CD8-positive, alpha-beta T cell (primary cell): ENCODE measurements at regions of chr5 and their contacts with region 1.

Region 1: GRCh38 chr5:96934708-96935558 is 947 bp upstream of the LNPEP start:
- DNase-seq: peak; percentile 88 to 98 (median 93)
- ATAC-seq: peak; percentile 64
- H3K4me3 ChIP-seq: peak overlapping the region; percentile 88 to 96
- H3K4me3 Mint-ChIP-seq: peak overlapping the region; percentile 89
- H3K27ac ChIP-seq: peak overlapping the region; percentile 88 to 89
- H3K27ac Mint-ChIP-seq: peak overlapping the region; percentile 96
- H3K4me1 ChIP-seq: peaks cover 60% of the 10 kb centered on the region
- H3K4me1 Mint-ChIP-seq: peaks cover 69% of the 10 kb centered on the region
- H3K27me3 ChIP-seq: no peaks in the 10 kb centered on the region
- H3K27me3 Mint-ChIP-seq: no peaks in the 10 kb centered on the region
- CTCF ChIP-seq: no peak

Region 2: GRCh38 chr5:95646554-95647431 is 1288.1 kb before region 1 on chr5 and contains the start of gene RFESD:
- CTCF ChIA-PET with region 1: no interaction called
- POLR2A ChIA-PET with region 1: no interaction called
- intact Hi-C with region 1: loop called in 1 of 2 experiments (anchors 10 kb)
- DNase-seq: peak; percentile 86 to 96 (median 93)
- ATAC-seq: peak; percentile 93
- H3K4me3 ChIP-seq: peak within 1 kb of the TSS; percentile 67 to 77
- H3K4me3 Mint-ChIP-seq: peak within 1 kb of the TSS; percentile 91
- H3K27ac ChIP-seq: peak within 1 kb of the TSS; percentile 76 to 85
- H3K27ac Mint-ChIP-seq: peak within 1 kb of the TSS; percentile 94
- H3K4me1 ChIP-seq: peaks cover 20% of the 10 kb centered on the region
- H3K4me1 Mint-ChIP-seq: peaks cover 40% of the 10 kb centered on the region
- H3K27me3 ChIP-seq: no peaks in the 10 kb centered on the region
- H3K27me3 Mint-ChIP-seq: no peaks in the 10 kb centered on the region
- CTCF ChIP-seq: peak; percentile 22
- total RNA-seq, gene RFESD: 1.00 to 1.7 TPM

Region 3: GRCh38 chr5:96807075-96807654 is 127.8 kb before region 1 on chr5:
- CTCF ChIA-PET with region 1: no interaction called
- POLR2A ChIA-PET with region 1: interaction called, 8 read pairs
- intact Hi-C with region 1: loop called (anchors 1 to 5 kb)
- DNase-seq: peak in 2 of 9 experiments; percentile 9 to 32
- ATAC-seq: no peak
- H3K4me3 ChIP-seq: peak overlapping the region; percentile 71 to 85
- H3K4me3 Mint-ChIP-seq: peak overlapping the region; percentile 95
- H3K27ac ChIP-seq: peak overlapping the region; percentile 93 to 96
- H3K27ac Mint-ChIP-seq: peak overlapping the region; percentile 98
- H3K4me1 ChIP-seq: peaks cover 70% of the 10 kb centered on the region
- H3K4me1 Mint-ChIP-seq: peaks cover 82% of the 10 kb centered on the region
- H3K27me3 ChIP-seq: no peaks in the 10 kb centered on the region
- H3K27me3 Mint-ChIP-seq: no peaks in the 10 kb centered on the region
- CTCF ChIP-seq: no peak

Region 4: DNA sequence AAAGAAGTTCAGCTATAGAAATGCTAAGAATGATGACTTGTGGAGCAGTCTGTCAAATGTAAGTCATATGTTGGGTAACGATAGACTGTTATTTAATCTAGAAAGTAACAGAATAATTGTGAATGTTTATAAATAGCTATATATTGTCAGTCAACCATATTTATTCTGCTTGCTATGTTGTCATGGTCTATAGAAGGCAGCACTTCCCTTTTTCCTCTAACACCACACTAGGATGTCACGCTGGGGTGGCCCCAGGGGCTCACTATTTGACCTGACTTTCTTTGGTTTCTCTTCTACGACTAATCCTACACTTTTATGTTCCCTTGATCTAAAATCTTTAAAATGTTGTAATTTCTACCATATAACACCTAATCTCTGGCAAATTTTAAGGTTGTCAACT is 38.1 kb before region 1 on chr5:
- CTCF ChIA-PET with region 1: no interaction called
- POLR2A ChIA-PET with region 1: interaction called, 11 read pairs
- intact Hi-C with region 1: loop called (anchors 5 kb)
- DNase-seq: peak in 2 of 9 experiments; percentile 19 to 53
- ATAC-seq: peak; percentile 45
- H3K4me3 ChIP-seq: peak overlapping the region in 1 of 2 experiments; percentile 19
- H3K4me3 Mint-ChIP-seq: peak overlapping the region; percentile 81
- H3K27ac ChIP-seq: peak overlapping the region; percentile 31 to 75
- H3K27ac Mint-ChIP-seq: peak overlapping the region; percentile 95
- H3K4me1 ChIP-seq: peaks cover 19% of the 10 kb centered on the region
- H3K4me1 Mint-ChIP-seq: peaks cover 48% of the 10 kb centered on the region
- H3K27me3 ChIP-seq: no peaks in the 10 kb centered on the region
- H3K27me3 Mint-ChIP-seq: no peaks in the 10 kb centered on the region
- CTCF ChIP-seq: no peak

Region 5: GRCh38 chr5:97162045-97162444 is 227.1 kb after region 1 on chr5:
- CTCF ChIA-PET with region 1: interaction called, 4 read pairs
- POLR2A ChIA-PET with region 1: interaction called, 3 read pairs
- intact Hi-C with region 1: loop called in 1 of 2 experiments (anchors 10 kb)
- DNase-seq: peak in 7 of 9 experiments; percentile 21 to 79 (median 54)
- ATAC-seq: peak; percentile 58
- H3K4me3 ChIP-seq: no peak overlapping the region
- H3K4me3 Mint-ChIP-seq: no peak overlapping the region
- H3K27ac ChIP-seq: no peak overlapping the region
- H3K27ac Mint-ChIP-seq: no peak overlapping the region
- H3K4me1 ChIP-seq: no peaks in the 10 kb centered on the region
- H3K4me1 Mint-ChIP-seq: peaks cover 10% of the 10 kb centered on the region
- H3K27me3 ChIP-seq: no peaks in the 10 kb centered on the region
- H3K27me3 Mint-ChIP-seq: no peaks in the 10 kb centered on the region
- CTCF ChIP-seq: peak; percentile 93

Region 6: DNA sequence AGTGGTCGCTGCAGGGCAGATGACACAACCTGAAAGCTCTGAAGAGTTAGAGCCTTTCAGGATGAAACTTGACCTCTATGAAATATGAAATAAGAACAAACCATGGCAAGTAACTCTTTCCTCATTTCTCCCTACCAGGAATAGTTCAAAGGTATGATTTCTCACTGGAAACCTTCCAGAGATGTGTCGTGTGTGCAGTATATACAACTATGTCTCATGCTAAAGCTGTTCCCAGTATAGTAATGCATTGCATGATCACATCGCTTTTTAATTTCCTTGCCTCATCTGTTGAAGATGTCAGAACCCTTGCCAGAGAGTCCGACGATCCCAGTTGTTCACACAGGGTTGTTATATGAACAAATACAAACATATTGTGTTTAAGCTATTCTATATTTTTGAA is 1792.8 kb after region 1 on chr5:
- CTCF ChIA-PET with region 1: no interaction called
- POLR2A ChIA-PET with region 1: no interaction called
- intact Hi-C with region 1: no loop called
- DNase-seq: no peak
- ATAC-seq: no peak
- H3K4me3 ChIP-seq: no peak overlapping the region
- H3K4me3 Mint-ChIP-seq: no peak overlapping the region
- H3K27ac ChIP-seq: no peak overlapping the region
- H3K27ac Mint-ChIP-seq: no peak overlapping the region
- H3K4me1 ChIP-seq: no peaks in the 10 kb centered on the region
- H3K4me1 Mint-ChIP-seq: no peaks in the 10 kb centered on the region
- H3K27me3 ChIP-seq: peaks cover 0 to 2% of the 10 kb centered on the region in 2 experiments
- H3K27me3 Mint-ChIP-seq: peaks cover 9% of the 10 kb centered on the region
- CTCF ChIP-seq: no peak

Region 7: DNA sequence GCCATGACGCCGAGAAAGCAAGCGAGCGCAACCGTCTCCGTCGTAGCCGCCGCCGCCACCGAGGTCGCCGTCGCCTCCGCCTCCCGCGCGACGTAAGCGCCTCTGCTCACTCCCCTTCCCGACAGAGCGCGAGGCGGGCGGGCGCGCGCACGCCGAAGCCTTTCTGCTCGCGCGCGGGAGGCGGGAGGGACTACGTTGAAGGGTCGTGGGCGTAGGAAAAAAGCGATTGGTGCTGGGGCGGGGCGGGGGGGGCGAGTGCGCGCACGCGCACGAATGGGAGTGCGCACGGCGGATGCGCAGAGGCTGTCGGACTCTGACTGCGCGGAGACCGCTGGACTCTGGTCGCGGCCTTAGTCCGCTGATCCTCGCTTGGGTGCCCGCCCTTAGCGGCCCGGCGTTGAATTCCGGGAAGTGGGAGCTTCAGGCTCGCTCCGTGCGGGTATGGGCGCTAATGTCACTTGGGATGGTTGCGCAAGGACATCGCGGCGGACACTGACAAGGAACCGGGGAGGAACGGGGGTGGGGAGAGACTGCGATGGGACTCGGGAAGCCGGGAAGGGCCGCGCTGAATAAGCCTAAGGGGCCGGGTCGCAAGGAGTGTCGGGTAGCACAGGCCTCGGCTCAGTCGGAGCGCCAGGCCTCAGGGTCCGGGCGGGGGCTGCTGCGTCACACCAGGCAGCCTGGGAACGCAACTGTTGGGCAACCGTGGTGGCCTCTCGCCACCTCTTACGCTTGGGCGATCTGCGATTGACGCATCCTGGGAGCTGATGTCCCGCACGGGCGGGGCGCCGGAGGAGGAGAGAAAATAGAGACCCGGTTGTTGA is 1994.2 kb after region 1 on chr5 and contains the start of gene CHD1:
- CTCF ChIA-PET with region 1: no interaction called
- POLR2A ChIA-PET with region 1: no interaction called
- intact Hi-C with region 1: loop called in 1 of 2 experiments (anchors 5 kb)
- DNase-seq: peak; percentile 91 to 99 (median 94)
- ATAC-seq: peak; percentile 67
- H3K4me3 ChIP-seq: peak within 1 kb of the TSS; percentile 97 to 100
- H3K4me3 Mint-ChIP-seq: peak within 1 kb of the TSS; percentile 96
- H3K27ac ChIP-seq: peak within 1 kb of the TSS; percentile 100
- H3K27ac Mint-ChIP-seq: peak within 1 kb of the TSS; percentile 100
- H3K4me1 ChIP-seq: peaks cover 65% of the 10 kb centered on the region
- H3K4me1 Mint-ChIP-seq: peaks cover 69% of the 10 kb centered on the region
- H3K27me3 ChIP-seq: no peaks in the 10 kb centered on the region
- H3K27me3 Mint-ChIP-seq: no peaks in the 10 kb centered on the region
- CTCF ChIP-seq: no peak
- total RNA-seq, gene CHD1: 319 to 327 TPM